Endothelial cell of umbilical vein (primary cell): ENCODE measurements at regions of chr4 and their contacts with region 1.

Region 1: DNA sequence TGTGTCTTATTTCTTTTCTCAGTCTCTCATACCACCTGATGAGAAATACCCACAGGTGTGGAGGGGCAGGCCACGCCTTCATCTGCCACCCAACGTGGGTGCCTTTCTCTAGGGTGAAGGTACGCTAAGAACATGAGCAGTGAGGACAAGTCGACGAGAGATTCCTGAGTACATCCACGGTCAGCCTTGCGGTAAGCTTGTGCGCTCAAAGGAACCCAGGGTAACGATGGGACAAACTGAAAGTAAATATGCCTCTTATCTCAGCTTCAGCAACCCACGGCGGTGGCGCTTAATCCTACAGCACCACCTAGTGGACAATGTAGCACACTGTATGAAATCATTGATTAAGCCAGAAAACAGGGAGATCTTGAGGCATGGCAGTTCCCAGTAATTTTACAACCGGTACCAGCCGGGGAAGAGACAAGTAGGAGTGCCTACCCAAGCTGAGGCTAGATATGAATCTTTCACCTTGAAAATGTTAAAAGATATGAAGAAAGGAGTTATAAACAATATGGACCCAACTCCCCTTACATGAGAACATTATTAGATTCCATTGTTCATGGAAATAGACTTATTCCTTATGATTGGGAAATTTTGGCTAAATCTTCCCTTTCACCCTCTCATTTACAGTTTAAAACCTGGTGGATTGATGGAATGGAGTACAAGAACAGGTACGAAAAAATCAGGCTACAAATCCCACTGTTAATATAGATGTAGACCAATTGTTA is 63.0 kb downstream of the ZNF732 start:
- DNase-seq: peak; percentile 69
- H3K4me3 ChIP-seq: peak overlapping the region in 2 of 3 experiments; percentile 18 to 24
- H3K27ac ChIP-seq: no peak overlapping the region
- H3K4me1 ChIP-seq: no peaks in the 10 kb centered on the region
- H3K27me3 ChIP-seq: no peaks in the 10 kb centered on the region
- CTCF ChIP-seq: peak; percentile 47 to 53
- POLR2A ChIP-seq: no peak

Region 2: GRCh38 chr4:674172-675035 is 432.1 kb after region 1 on chr4 and contains the starts of genes ATP5ME and MYL5:
- CTCF ChIA-PET with region 1: interaction called, 15 read pairs
- POLR2A ChIA-PET with region 1: no interaction called
- dilution Hi-C with region 1: no loop called
- intact Hi-C with region 1: no loop called
- DNase-seq: peak; percentile 99
- H3K4me3 ChIP-seq: peak within 1 kb of the TSS; percentile 64 to 87 (median 78)
- H3K27ac ChIP-seq: peak within 1 kb of the TSS; percentile 67
- H3K4me1 ChIP-seq: peaks cover 12% of the 10 kb centered on the region
- H3K27me3 ChIP-seq: no peaks in the 10 kb centered on the region
- CTCF ChIP-seq: peak; percentile 97 to 100
- POLR2A ChIP-seq: peak; percentile 83
- total RNA-seq, gene ATP5ME: 303 and 310 TPM in 2 replicates
- total RNA-seq, gene MYL5: 13.4 and 15.5 TPM in 2 replicates